Astrocyte of the cerebellum (primary cell): ENCODE measurements at regions of chr7 and their contacts with region 1.

Region 1: DNA sequence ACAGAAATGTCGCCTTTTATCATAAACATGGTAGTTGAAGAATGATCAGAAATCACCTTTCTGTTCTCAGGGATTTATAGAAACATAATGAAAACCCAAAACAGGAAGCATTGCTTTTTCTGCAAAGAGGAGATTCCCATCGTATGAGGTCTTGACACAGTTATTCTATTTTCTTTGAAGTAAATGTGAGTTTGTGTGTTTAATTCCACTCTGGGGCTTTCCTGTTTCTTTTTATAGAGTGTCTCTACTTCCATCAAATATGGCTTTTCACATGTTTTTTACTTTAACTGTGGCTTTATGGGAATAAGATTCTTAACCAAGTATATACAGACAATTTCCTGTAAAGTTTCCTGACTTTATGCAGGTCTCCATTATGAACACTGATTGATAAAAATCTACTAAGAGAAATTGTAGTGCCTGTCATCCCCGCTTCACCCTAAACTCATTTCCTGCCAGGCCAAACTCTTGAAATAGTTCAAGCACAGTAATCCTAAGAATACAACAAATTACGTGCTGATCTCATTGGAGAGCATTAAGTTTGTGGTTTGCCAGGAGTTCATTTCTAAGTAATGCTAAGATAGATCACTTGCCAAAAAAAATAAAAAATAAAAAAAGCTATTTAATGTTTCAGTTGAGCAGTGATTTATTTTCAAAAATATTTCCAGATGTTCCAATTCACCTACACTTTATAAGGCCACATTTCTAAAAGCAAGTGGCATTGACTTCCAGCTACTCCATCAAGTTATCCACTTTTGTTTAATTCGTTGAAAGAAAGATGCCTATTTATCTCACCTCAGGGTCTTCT is 52.2 kb upstream of the SEC61G start:
- DNase-seq: peak; percentile 83
- H3K4me3 ChIP-seq: no peak overlapping the region
- CTCF ChIP-seq: no peak

Region 2: GRCh38 chr7:54858008-54858692 is 46.9 kb after region 1 on chr7:
- in situ Hi-C with region 1: no loop called
- DNase-seq: no peak
- H3K4me3 ChIP-seq: no peak overlapping the region
- CTCF ChIP-seq: no peak

Region 3: DNA sequence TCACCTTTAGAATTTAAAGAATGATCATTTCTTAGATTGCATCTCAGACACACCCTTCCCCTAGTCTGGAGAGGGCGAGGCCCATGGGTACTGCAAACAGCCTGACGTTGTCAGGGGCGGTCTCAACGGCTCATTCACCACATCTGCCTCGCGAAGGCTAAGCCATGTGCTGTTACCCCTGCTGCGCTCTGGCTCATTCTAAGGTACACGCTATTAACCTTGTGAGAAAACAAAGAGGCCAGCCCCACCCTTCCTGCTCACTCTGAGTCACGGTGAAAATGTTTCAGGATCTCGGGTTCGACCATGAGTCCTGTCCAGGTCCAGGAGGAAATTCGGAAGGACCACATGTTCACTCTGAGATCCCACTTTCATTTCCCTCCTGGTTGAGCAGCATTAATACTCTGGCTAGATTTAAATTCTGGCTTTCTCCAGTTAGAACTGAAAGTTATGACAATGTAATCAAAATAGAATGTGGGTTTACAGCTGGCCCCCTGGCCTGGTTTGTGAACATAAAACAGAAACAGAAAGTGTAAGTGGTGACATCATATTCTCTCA is 262.8 kb after region 1 on chr7:
- in situ Hi-C with region 1: loop called (anchors 25 kb)
- DNase-seq: peak; percentile 92
- H3K4me3 ChIP-seq: peak overlapping the region; percentile 10
- CTCF ChIP-seq: no peak

Region 4: DNA sequence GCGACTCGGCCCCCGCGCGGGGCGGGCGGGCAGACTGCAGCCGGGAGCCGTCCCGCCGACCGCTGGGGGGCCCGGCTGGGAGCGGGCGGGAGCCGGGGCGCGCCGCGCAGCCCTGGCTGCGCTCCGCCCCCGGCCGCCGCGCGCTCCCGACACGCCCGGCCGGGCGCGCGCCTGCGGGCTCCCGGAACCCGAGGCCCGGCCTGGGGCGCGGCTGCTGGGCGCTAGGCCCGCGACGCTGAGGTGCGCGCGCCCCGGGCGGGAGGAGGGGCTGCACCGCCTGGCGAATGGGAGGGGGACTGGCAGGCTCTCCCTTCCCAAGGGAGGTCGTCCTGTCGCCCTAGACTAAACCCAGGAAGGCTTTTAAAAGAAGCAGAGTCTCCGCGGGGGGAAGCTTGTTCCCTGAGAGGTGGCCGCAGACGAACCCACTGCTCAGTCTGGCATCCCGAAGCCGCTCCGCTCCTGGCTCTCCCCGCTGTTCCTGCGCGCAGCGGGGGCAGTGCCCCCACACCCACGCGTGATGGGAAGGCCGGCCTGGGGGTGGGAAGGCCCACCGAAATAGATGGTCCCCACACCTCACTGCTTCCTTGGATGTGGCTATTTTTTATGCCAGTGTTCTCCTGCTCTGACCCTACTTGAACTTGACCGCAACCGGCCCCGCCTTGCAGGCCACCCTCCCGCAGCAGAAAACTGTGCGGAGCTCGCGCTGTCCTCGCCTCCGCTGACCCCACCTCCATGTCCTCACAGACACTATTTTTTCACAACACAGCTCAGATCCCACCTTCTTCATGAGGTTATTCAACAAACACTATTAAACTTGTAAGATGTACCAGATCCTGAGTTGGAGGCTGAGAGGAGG is 761.4 kb after region 1 on chr7 and contains the start of gene VOPP1:
- in situ Hi-C with region 1: loop called (anchors 25 kb)
- DNase-seq: no peak
- H3K4me3 ChIP-seq: peak within 1 kb of the TSS; percentile 89
- CTCF ChIP-seq: no peak